ENCODE measurements at regions of chr15 and their contacts with region 1.

Region 1: GRCh38 chr15:79028411-79028964 is 62.1 kb downstream of the RASGRF1 start:
- DNase-seq: peak; percentile 23 to 90
- H3K4me3 ChIP-seq: no peak overlapping the region
- H3K27ac ChIP-seq: no peak overlapping the region
- H3K4me1 ChIP-seq: no peaks in the 10 kb centered on the region; a peak in 1 of 7 replicates
- H3K27me3 ChIP-seq: no peaks in the 10 kb centered on the region
- CTCF ChIP-seq: peak; percentile 63 to 95 (median 95)
- EP300 ChIP-seq: no peak
- POLR2A ChIP-seq: no peak
- RAD21 ChIP-seq: peak; percentile 97 to 99

Region 2: GRCh38 chr15:78909791-78910228 is 118.7 kb before region 1 on chr15:
- CTCF ChIA-PET with region 1: interaction called, 49 read pairs
- POLR2A ChIA-PET with region 1: interaction called, 7 read pairs
- DNase-seq: peak in 1 of 2 experiments; percentile 79
- H3K4me3 ChIP-seq: no peak overlapping the region
- H3K27ac ChIP-seq: no peak overlapping the region
- H3K4me1 ChIP-seq: peaks cover 0 to 3% (median 1%) of the 10 kb centered on the region in 4 experiments; a peak in 3 of 7 replicates
- H3K27me3 ChIP-seq: no peaks in the 10 kb centered on the region
- CTCF ChIP-seq: peak; percentile 59 to 93 (median 86)
- EP300 ChIP-seq: no peak
- POLR2A ChIP-seq: no peak
- RAD21 ChIP-seq: peak; percentile 89 to 90

Region 3: DNA sequence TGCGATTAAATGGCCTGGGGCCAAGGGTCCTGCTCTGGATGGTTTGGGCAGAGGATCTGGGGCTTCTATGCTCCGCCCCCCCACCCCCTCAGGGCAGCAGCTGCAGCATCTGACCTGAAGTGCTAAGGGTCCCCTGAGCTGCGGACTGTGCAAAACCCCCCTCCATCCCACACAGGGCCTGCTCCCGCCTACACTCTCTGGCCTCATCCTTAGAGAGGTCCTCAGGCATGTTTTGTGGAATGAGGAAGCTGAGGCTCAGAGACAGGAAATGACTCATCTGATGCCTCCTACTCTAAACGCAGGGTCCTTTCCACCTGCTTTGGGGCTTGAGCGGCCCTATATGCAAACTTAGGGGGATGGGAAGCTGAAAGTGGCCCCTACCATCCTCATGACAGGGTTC is 24.2 kb before region 1 on chr15:
- CTCF ChIA-PET with region 1: interaction called, 55 read pairs
- POLR2A ChIA-PET with region 1: no interaction called
- DNase-seq: no peak
- H3K4me3 ChIP-seq: no peak overlapping the region
- H3K27ac ChIP-seq: no peak overlapping the region
- H3K4me1 ChIP-seq: peaks cover 0 to 10% (median under 1%) of the 10 kb centered on the region in 4 experiments; a peak in 4 of 7 replicates
- H3K27me3 ChIP-seq: no peaks in the 10 kb centered on the region; a peak in 2 of 7 replicates
- CTCF ChIP-seq: no peak
- EP300 ChIP-seq: no peak
- POLR2A ChIP-seq: no peak
- RAD21 ChIP-seq: no peak

Region 4: DNA sequence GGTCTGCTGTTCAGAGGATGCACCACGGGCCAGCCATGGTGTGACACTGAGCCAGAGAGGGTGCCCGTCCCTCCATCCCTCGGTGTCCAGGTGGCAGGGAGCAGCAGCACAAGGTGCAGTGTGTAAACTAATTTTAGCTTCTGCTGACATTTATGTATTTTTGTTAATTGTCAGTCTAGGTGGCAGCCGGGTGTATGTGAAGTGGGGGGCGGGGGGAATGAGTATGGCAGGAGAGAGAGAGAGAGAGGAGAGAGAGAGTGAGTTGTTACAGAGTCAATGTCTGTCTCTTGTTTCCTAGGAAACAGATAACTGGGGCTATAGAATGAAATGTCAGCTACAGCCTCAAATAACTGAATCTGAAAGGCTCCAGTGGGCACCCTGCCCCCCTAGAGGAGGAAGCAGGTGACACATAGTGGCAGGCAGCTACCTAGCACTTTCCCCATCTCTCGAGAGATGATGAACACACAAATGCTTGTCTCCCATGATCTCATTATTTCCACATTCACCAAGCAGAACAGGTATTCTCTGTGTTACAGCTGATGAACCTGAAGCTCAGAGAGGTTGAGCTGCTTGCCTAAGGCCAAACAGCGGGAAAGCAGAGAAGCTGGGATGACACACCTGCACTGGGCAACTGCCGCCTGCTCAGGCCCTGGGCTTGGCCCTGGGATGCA is 37.4 kb after region 1 on chr15:
- CTCF ChIA-PET with region 1: interaction called, 236 read pairs
- POLR2A ChIA-PET with region 1: no interaction called
- DNase-seq: no peak
- H3K4me3 ChIP-seq: no peak overlapping the region
- H3K27ac ChIP-seq: no peak overlapping the region
- H3K4me1 ChIP-seq: peaks cover 2 to 3% (median 3%) of the 10 kb centered on the region in 4 experiments; a peak in 5 of 7 replicates
- H3K27me3 ChIP-seq: peaks cover 6 to 15% (median 13%) of the 10 kb centered on the region in 4 experiments; a peak in 6 of 7 replicates
- CTCF ChIP-seq: no peak
- EP300 ChIP-seq: no peak
- POLR2A ChIP-seq: no peak
- RAD21 ChIP-seq: no peak; a peak in 1 of 4 replicates

Region 5: DNA sequence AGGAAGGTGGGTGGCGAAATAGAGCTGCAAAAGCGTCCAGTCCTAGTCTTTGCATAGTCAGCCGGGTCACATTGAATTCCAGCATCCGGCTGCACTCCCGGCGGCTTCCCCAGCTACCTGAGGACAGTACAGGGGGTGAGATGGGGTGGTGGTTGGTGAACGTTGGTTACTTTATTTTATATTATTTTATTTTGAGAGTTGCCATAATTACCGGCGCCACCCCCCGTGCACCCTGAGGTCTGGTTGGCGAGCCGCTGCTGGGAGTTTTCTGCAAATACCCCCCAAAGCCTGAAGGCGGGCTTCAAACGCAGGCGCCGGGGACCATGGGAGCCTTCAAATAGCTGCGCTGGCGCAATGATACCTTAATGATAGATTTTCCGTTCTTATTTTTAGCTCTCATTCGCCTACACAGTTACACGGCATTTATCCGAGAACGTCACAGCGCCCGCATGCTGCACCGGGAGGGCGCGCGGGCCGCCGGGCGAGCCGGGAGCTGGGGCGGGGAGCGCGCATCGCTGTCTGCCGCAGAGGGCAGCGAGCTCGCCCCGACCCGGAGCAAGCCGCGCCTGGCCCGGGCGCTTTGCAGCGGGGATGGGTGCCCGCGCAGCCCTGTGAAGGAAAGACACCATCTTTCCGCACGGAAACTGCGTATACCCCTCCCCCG is 62.8 kb after region 1 on chr15:
- CTCF ChIA-PET with region 1: interaction called, 46 read pairs
- POLR2A ChIA-PET with region 1: no interaction called
- DNase-seq: peak in 1 of 2 experiments; percentile 67
- H3K4me3 ChIP-seq: peak overlapping the region; percentile 43 to 65 (median 46)
- H3K27ac ChIP-seq: no peak overlapping the region
- H3K4me1 ChIP-seq: peaks cover 0 to 19% (median 11%) of the 10 kb centered on the region in 4 experiments; a peak in 6 of 7 replicates
- H3K27me3 ChIP-seq: peaks cover 54 to 81% (median 77%) of the 10 kb centered on the region in 4 experiments
- CTCF ChIP-seq: no peak
- EP300 ChIP-seq: no peak
- POLR2A ChIP-seq: no peak
- RAD21 ChIP-seq: no peak

Region 6: DNA sequence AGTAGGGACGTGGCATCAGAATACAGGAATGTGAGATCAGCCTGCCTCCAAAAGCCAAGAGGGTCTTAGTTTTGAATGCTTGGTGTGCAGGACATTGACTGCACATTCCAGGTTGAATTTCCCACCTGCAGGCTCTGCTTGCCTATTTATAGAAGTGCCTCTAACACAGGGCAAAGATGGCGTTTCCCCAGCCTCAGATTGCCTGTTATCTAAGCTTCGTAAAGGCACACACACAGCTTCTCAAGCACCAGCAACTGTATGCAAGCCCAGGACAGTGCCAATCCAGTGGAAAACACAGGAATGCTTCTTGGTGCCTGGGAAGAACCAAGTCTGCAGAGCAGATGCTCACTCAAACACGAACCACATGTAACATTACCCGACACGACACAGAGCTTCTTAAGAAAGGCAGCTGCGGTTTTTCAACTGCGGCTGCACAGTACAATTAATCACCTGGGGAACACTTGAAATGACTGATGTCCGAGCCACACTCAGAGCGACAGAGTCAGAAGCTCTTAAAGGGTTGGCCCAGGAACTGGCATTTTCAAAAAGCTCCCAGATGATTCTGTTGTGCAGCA is 164.1 kb after region 1 on chr15:
- CTCF ChIA-PET with region 1: interaction called, 37 read pairs
- POLR2A ChIA-PET with region 1: no interaction called
- DNase-seq: no peak
- H3K4me3 ChIP-seq: no peak overlapping the region
- H3K27ac ChIP-seq: no peak overlapping the region
- H3K4me1 ChIP-seq: peaks cover 0 to 8% (median 5%) of the 10 kb centered on the region in 4 experiments; a peak in 6 of 7 replicates
- H3K27me3 ChIP-seq: no peaks in the 10 kb centered on the region; a peak in 1 of 7 replicates
- CTCF ChIP-seq: no peak
- EP300 ChIP-seq: no peak
- POLR2A ChIP-seq: no peak
- RAD21 ChIP-seq: no peak

Measured in H1 (cell line).